Adrenal gland (tissue), 19 donors: ENCODE measurements at regions of chr3 and their contacts with region 1.

Region 1: GRCh38 chr3:44976002-44976815 is at the starts of genes EXOSC7 and ZDHHC3:
- DNase-seq: peak; percentile 82 to 90 (median 88)
- H3K4me3 ChIP-seq: peak within 1 kb of the TSS; percentile 79 to 97 (median 93)
- H3K27ac ChIP-seq: peak within 1 kb of the TSS; percentile 15 to 95 (median 90)
- H3K4me1 ChIP-seq: peaks cover 5 to 41% of the 10 kb centered on the region in 2 donors
- H3K27me3 ChIP-seq: no peaks in the 10 kb centered on the region
- CTCF ChIP-seq: no peak
- POLR2A ChIP-seq: peak; percentile 31 to 72
- total RNA-seq, gene EXOSC7: 72.9 to 214 (median 93.0) TPM
- total RNA-seq, gene ZDHHC3: 66.1 to 143 (median 97.0) TPM

Region 2: DNA sequence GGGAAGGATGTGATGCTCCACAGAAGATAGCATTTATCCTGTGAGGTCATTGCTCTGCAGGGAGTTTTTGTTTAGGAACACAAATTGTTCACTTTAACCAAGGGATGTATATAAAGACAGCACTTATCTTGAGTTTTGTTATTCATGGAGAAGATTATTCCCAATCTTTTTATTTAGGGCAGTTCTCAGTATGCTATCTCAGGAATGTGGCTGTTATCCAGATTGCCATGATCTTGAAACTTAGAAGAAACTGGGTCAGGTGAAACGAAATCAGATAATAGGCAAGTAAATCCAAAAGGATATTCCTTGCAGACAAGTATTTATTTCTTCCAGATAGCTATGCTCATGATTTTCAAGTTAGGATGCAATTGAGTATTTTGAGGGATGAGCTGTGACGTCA is 133.8 kb before region 1 on chr3:
- intact Hi-C with region 1: no loop called
- DNase-seq: no peak
- H3K4me3 ChIP-seq: no peak overlapping the region
- H3K27ac ChIP-seq: no peak overlapping the region
- H3K4me1 ChIP-seq: peaks cover 3 to 11% of the 10 kb centered on the region in 2 donors
- H3K27me3 ChIP-seq: no peaks in the 10 kb centered on the region
- CTCF ChIP-seq: no peak
- POLR2A ChIP-seq: no peak

Region 3: GRCh38 chr3:45026957-45027356 is 50.7 kb after region 1 on chr3:
- intact Hi-C with region 1: loop called in 1 of 2 experiments (anchors 10 kb)
- DNase-seq: peak in 6 of 7 donors; percentile 45 to 78 (median 56)
- H3K4me3 ChIP-seq: peak overlapping the region in 1 of 4 donors; percentile 26
- H3K27ac ChIP-seq: peak overlapping the region in 2 of 5 donors; percentile 42 to 81
- H3K4me1 ChIP-seq: peaks cover 0 to 38% of the 10 kb centered on the region in 2 donors
- H3K27me3 ChIP-seq: no peaks in the 10 kb centered on the region
- CTCF ChIP-seq: no peak
- POLR2A ChIP-seq: no peak